ENCODE measurements at regions of chr12 and their contacts with region 1.

Region 1: DNA sequence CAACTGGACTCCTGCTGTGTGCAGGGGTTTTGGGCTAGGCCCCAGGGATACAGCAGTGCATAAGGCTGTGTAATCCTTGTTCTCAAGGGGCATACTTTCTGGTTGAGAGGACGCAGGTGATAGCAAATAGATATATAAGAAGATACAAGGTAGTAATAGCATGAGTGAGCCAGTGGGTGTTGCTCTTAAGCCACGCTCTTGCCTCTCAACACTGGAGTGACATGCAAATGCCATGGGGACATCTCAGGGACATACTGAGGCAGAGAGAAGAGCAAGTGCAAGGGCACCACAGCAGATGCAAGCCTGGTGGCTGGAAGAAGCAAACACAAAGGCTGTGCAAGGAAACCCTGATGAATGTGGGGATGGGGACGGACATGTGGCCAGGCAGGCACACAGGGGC is 223.3 kb downstream of the CHST11 start:
- DNase-seq: peak; percentile 58
- H3K4me3 Mint-ChIP-seq: no peak overlapping the region
- H3K27ac Mint-ChIP-seq: peak overlapping the region; percentile 75
- H3K4me1 Mint-ChIP-seq: peaks cover 74% of the 10 kb centered on the region
- H3K27me3 Mint-ChIP-seq: no peaks in the 10 kb centered on the region

Region 2: GRCh38 chr12:104372061-104372720 is 307.9 kb before region 1 on chr12:
- CTCF ChIA-PET with region 1: no interaction called
- POLR2A ChIA-PET with region 1: no interaction called
- intact Hi-C with region 1: no loop called
- DNase-seq: peak; percentile 60
- H3K4me3 Mint-ChIP-seq: no peak overlapping the region
- H3K27ac Mint-ChIP-seq: no peak overlapping the region
- H3K4me1 Mint-ChIP-seq: peaks cover 10% of the 10 kb centered on the region
- H3K27me3 Mint-ChIP-seq: no peaks in the 10 kb centered on the region

Region 3: GRCh38 chr12:104604070-104604994 is 75.7 kb before region 1 on chr12:
- CTCF ChIA-PET with region 1: no interaction called
- POLR2A ChIA-PET with region 1: no interaction called
- intact Hi-C with region 1: loop called (anchors 2 kb)
- DNase-seq: peak; percentile 81
- H3K4me3 Mint-ChIP-seq: peak overlapping the region; percentile 19
- H3K27ac Mint-ChIP-seq: peak overlapping the region; percentile 92
- H3K4me1 Mint-ChIP-seq: peaks cover 47% of the 10 kb centered on the region
- H3K27me3 Mint-ChIP-seq: no peaks in the 10 kb centered on the region

Region 4: DNA sequence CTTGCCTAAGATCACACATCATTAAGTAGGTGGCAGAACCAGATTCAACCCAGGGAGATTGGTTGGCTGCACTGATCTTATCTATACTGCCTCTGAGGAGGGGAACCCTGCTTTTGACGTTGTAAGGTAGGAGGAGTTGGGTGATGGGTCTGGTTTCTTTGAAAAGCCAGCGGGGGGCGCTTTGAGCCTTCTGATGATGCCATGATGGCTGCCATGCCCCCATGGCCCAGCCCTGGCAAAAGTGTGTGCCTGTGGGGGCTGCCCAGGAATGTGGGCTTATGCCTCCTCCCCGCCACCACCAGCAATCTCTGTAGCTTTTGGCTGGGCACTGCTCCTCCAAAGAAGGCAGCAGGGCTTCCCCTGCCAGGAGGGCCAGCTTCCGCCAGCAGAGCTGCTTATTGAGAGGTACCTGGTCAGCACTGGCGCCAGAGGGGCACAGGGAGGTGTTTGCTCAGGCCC is 53.7 kb after region 1 on chr12:
- CTCF ChIA-PET with region 1: no interaction called
- POLR2A ChIA-PET with region 1: no interaction called
- intact Hi-C with region 1: loop called (anchors 5 kb)
- DNase-seq: peak; percentile 58
- H3K4me3 Mint-ChIP-seq: no peak overlapping the region
- H3K27ac Mint-ChIP-seq: no peak overlapping the region
- H3K4me1 Mint-ChIP-seq: peaks cover 69% of the 10 kb centered on the region
- H3K27me3 Mint-ChIP-seq: no peaks in the 10 kb centered on the region

Region 5: GRCh38 chr12:104825408-104825807 is 145.3 kb after region 1 on chr12:
- CTCF ChIA-PET with region 1: no interaction called
- POLR2A ChIA-PET with region 1: no interaction called
- intact Hi-C with region 1: loop called (anchors 5 kb)
- DNase-seq: peak; percentile 16
- H3K4me3 Mint-ChIP-seq: no peak overlapping the region
- H3K27ac Mint-ChIP-seq: no peak overlapping the region
- H3K4me1 Mint-ChIP-seq: peaks cover 5% of the 10 kb centered on the region
- H3K27me3 Mint-ChIP-seq: no peaks in the 10 kb centered on the region

Region 6: DNA sequence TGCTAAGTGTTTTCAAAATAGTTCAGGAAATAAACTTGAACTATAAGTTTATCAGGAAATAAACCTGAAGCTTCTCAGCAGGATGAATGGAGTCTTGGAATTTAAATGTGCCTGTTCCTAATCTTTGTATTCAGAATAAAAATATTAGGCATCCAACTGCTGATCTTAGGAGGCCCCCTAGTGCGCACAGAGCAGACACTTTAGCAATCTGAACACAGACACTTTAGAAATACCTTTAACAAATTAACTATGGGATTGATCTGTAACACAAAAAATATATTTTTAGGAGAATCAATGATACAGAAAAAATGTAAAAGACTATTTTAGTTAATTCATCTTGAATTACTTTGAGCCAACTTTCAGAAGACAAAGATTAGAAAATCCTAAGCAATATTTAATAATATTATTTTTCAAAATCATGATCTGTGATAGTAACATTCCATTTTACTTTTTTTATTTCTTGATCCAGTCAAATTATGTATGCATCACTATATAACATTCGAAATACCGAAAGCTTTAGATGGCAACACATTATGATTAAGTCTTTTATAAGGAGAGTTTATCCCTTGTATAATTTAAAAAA is 197.1 kb after region 1 on chr12:
- CTCF ChIA-PET with region 1: no interaction called
- POLR2A ChIA-PET with region 1: no interaction called
- intact Hi-C with region 1: loop called (anchors 2 kb)
- DNase-seq: peak; percentile 40
- H3K4me3 Mint-ChIP-seq: no peak overlapping the region
- H3K27ac Mint-ChIP-seq: no peak overlapping the region
- H3K4me1 Mint-ChIP-seq: peaks cover 3% of the 10 kb centered on the region
- H3K27me3 Mint-ChIP-seq: no peaks in the 10 kb centered on the region

Region 7: DNA sequence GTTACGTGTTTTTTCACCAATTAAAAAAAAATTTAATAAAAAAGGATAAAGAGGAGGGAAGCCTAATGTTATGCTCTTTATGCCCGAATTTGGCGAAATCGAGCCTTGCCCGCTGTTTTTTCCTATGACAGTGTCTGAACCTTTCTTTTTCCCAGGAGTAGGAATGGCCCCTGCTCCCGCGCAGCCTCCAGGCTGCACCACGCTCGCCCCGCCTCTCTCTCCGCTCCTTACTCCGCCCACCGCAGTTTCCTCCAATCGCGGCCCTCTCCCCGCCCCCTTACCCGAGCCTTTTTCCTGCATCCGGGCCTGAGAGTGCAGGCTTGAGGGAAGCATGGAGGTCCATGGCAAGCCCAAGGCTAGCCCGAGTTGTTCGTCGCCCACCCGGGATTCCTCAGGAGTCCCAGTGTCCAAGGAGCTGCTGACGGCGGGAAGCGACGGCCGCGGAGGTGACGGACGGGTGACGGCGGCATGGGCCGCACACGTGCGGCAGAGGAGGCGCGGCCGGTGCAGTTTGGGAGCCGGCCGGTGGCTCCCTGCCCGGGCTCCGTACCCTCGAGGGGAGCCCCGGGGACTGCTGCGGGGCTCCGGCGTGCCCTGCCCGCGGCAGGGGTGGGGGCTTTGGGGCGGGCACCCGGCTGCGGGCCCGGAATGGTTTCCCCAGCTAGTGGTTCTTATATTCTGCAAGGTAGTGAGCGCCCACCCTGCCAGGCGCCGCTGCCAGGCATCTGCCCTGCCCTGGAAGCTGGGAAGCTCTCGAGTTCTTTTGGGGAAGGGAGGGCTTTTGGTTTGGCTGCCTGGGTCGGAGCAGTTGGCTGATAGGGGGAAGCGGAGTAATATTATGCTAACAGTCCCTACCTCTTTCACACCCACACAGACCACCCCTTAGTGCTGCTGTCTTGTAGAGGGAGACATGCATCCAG is 306.2 kb after region 1 on chr12 and contains the start of gene NOPCHAP1:
- CTCF ChIA-PET with region 1: no interaction called
- POLR2A ChIA-PET with region 1: no interaction called
- intact Hi-C with region 1: loop called (anchors 5 kb)
- DNase-seq: peak; percentile 91
- H3K4me3 Mint-ChIP-seq: peak within 1 kb of the TSS; percentile 77
- H3K27ac Mint-ChIP-seq: peak within 1 kb of the TSS; percentile 59
- H3K4me1 Mint-ChIP-seq: peaks cover 28% of the 10 kb centered on the region
- H3K27me3 Mint-ChIP-seq: peaks cover 3% of the 10 kb centered on the region
- total RNA-seq, gene NOPCHAP1: 30.5 to 30.9 TPM

Region 8: DNA sequence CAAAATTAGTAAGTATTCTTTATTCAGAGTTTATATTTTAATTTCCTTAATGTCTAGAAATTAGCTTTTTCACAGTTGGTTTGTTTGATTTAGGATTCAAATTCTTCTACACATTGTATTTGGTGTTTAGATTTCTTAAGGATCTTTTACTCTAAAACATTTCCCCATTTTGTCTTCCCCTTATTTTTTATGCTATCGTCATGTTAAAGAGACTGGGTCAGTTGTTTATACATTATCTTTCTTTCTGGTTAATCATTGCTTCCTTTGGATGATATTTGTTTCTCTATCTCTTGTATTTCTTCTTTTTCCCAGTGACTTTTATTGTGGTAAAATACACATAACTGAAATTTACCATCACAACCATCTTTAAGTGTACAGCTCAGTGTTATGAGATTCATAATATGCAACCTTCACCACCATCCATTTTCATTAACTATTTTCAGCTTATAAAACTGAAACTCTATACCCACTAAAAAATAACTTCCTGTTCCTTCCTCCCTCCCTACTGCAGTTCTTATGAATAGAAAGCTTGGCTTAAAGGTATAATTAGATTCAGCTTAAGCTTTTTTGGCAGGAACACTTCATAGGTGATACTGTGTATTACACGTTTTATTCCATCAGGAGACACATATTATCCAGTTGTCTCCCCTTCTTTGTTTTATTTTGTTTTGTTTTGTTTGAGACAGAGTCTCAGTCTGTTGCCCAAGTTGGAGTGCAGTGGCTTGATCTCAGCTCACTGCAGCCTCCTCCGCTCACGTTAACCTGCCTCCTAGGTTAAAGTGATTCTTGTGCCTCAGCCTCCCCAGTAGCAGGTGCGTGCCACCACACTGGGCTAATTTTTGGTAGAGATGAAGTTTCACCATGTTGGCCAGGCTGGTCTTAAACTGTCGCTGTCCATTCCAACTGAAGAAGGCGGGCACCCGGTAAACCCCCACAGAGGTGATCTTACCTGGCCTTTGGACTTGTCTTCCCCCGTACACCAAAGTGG is 351.0 kb after region 1 on chr12:
- CTCF ChIA-PET with region 1: no interaction called
- POLR2A ChIA-PET with region 1: no interaction called
- intact Hi-C with region 1: loop called (anchors 5 kb)
- DNase-seq: no peak
- H3K4me3 Mint-ChIP-seq: no peak overlapping the region
- H3K27ac Mint-ChIP-seq: peak overlapping the region; percentile 3
- H3K4me1 Mint-ChIP-seq: peaks cover 31% of the 10 kb centered on the region
- H3K27me3 Mint-ChIP-seq: no peaks in the 10 kb centered on the region